Dorsolateral prefrontal cortex (tissue), 120 donors: ENCODE measurements at regions of chr7 and their contacts with region 1.

Region 1: GRCh38 chr7:63925623-63926460 is 72.8 kb upstream of the ZNF722 start:
- DNase-seq: peak; percentile 63 to 97 (median 94)
- H3K4me3 ChIP-seq: peak overlapping the region; percentile 24 to 93 (median 71)
- H3K27ac ChIP-seq: peak overlapping the region in 58 of 59 donors; percentile 53 to 99 (median 92)
- H3K27me3 ChIP-seq: peaks cover 0 to 8% (median 0%) of the 10 kb centered on the region in 45 donors
- CTCF ChIP-seq: peak in 8 of 56 donors; percentile 5 to 35 (median 16)

Region 2: GRCh38 chr7:63876707-63877322 is 49.0 kb before region 1 on chr7:
- intact Hi-C with region 1: no loop called
- DNase-seq: no peak
- H3K4me3 ChIP-seq: no peak overlapping the region
- H3K27ac ChIP-seq: no peak overlapping the region
- H3K27me3 ChIP-seq: no peaks in the 10 kb centered on the region
- CTCF ChIP-seq: no peak

Region 3: GRCh38 chr7:63900394-63901203 is 25.2 kb before region 1 on chr7:
- intact Hi-C with region 1: loop called (anchors 1 to 2 kb)
- DNase-seq: peak; percentile 81 to 99 (median 95)
- H3K4me3 ChIP-seq: peak overlapping the region; percentile 35 to 95 (median 77)
- H3K27ac ChIP-seq: peak overlapping the region in 39 of 59 donors; percentile 6 to 84 (median 63)
- H3K27me3 ChIP-seq: peaks cover 0 to 4% (median 0%) of the 10 kb centered on the region in 45 donors
- CTCF ChIP-seq: peak in 28 of 56 donors; percentile 6 to 52 (median 30)

Region 4: GRCh38 chr7:64045301-64046040 is 119.6 kb after region 1 on chr7 and contains the start of gene ZNF727:
- intact Hi-C with region 1: loop called in 1 of 2 experiments (anchors 10 kb)
- DNase-seq: peak; percentile 52 to 88 (median 84)
- H3K4me3 ChIP-seq: peak within 1 kb of the TSS; percentile 28 to 86 (median 68)
- H3K27ac ChIP-seq: peak within 1 kb of the TSS in 58 of 59 donors; percentile 7 to 91 (median 77)
- H3K27me3 ChIP-seq: peaks cover 0 to 7% (median 0%) of the 10 kb centered on the region in 45 donors
- CTCF ChIP-seq: peak in 2 of 56 donors; percentile 12 to 17
- total RNA-seq, gene ZNF727: 1.0 to 20.9 (median 11.1) TPM

Region 5: GRCh38 chr7:64101943-64102655 is 176.3 kb after region 1 on chr7:
- intact Hi-C with region 1: no loop called
- DNase-seq: peak in 1 of 10 donors; percentile 2
- H3K4me3 ChIP-seq: no peak overlapping the region
- H3K27ac ChIP-seq: no peak overlapping the region
- H3K27me3 ChIP-seq: peaks cover 0 to 12% (median 0%) of the 10 kb centered on the region in 45 donors
- CTCF ChIP-seq: no peak